ENCODE measurements at regions of chr18 and their contacts with region 1.

Region 1: GRCh38 chr18:2459886-2460285 is 111.4 kb downstream of the METTL4 start:
- DNase-seq: no peak
- H3K4me3 ChIP-seq: no peak overlapping the region
- H3K27ac ChIP-seq: no peak overlapping the region
- H3K4me1 ChIP-seq: no peaks in the 10 kb centered on the region
- H3K27me3 ChIP-seq: no peaks in the 10 kb centered on the region
- CTCF ChIP-seq: no peak

Region 2: DNA sequence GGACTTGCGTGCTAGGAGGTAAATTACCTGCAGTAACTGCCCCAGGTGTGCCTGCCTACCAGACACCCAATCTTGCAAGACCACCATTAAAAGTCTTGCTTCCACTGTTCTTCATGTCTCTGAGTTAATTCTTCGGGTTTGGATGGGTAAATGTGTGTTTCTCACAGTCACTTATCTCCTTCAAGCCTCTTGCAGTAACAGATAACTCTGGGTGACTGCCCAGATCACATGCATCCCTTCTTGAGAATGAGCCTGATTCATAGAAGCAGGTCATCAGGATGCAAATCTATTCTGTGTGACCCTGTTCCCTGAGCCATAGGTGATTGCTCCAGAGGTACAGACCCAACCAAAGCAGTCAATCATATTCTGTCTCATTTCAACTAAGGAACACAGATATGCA is 83.2 kb before region 1 on chr18:
- intact Hi-C with region 1: no loop called
- DNase-seq: no peak
- H3K4me3 ChIP-seq: no peak overlapping the region
- H3K27ac ChIP-seq: no peak overlapping the region
- H3K4me1 ChIP-seq: no peaks in the 10 kb centered on the region
- H3K27me3 ChIP-seq: no peaks in the 10 kb centered on the region
- CTCF ChIP-seq: no peak

Region 3: GRCh38 chr18:2406544-2406943 is 53.3 kb before region 1 on chr18:
- intact Hi-C with region 1: loop called (anchors 10 kb)
- DNase-seq: no peak
- H3K4me3 ChIP-seq: no peak overlapping the region
- H3K27ac ChIP-seq: no peak overlapping the region
- H3K4me1 ChIP-seq: no peaks in the 10 kb centered on the region
- H3K27me3 ChIP-seq: no peaks in the 10 kb centered on the region
- CTCF ChIP-seq: no peak

Region 4: GRCh38 chr18:2425426-2426317 is 34.2 kb before region 1 on chr18:
- intact Hi-C with region 1: no loop called
- DNase-seq: no peak
- H3K4me3 ChIP-seq: no peak overlapping the region
- H3K27ac ChIP-seq: no peak overlapping the region
- H3K4me1 ChIP-seq: no peaks in the 10 kb centered on the region
- H3K27me3 ChIP-seq: no peaks in the 10 kb centered on the region
- CTCF ChIP-seq: no peak

Region 5: GRCh38 chr18:3935316-3935715 is 1475.4 kb after region 1 on chr18:
- intact Hi-C with region 1: no loop called
- DNase-seq: no peak
- H3K4me3 ChIP-seq: no peak overlapping the region
- H3K27ac ChIP-seq: no peak overlapping the region
- H3K4me1 ChIP-seq: no peaks in the 10 kb centered on the region
- H3K27me3 ChIP-seq: no peaks in the 10 kb centered on the region
- CTCF ChIP-seq: no peak

Measured in ascending aorta (tissue), 2 donors.